T-cell (primary cell): ENCODE measurements at regions of chr1 and their contacts with region 1.

Region 1: GRCh38 chr1:92310185-92310597 is 11.3 kb downstream of the RPAP2 start:
- DNase-seq: peak in 1 of 35 experiments; percentile 65
- ATAC-seq: peak in 3 of 4 experiments; percentile 45 to 63 (median 58)
- H3K4me3 ChIP-seq: no peak overlapping the region
- H3K4me3 Mint-ChIP-seq: no peak overlapping the region
- H3K27ac ChIP-seq: no peak overlapping the region
- H3K27ac Mint-ChIP-seq: peak overlapping the region in 1 of 2 donors; percentile 34
- H3K4me1 ChIP-seq: peaks cover 13 to 19% of the 10 kb centered on the region in 2 experiments
- H3K4me1 Mint-ChIP-seq: peaks cover 36 to 39% (median 38%) of the 10 kb centered on the region in 3 donors
- H3K27me3 ChIP-seq: no peaks in the 10 kb centered on the region
- H3K27me3 Mint-ChIP-seq: no peaks in the 10 kb centered on the region

Region 2: GRCh38 chr1:91997607-91998195 is 312.5 kb before region 1 on chr1:
- CTCF ChIA-PET with region 1: interaction called, 4 to 11 read pairs
- POLR2A ChIA-PET with region 1: no interaction called
- DNase-seq: peak in 30 of 35 experiments; percentile 1 to 80 (median 36)
- ATAC-seq: peak in 1 of 4 experiments; percentile 59
- H3K4me3 ChIP-seq: no peak overlapping the region
- H3K4me3 Mint-ChIP-seq: no peak overlapping the region
- H3K27ac ChIP-seq: no peak overlapping the region
- H3K27ac Mint-ChIP-seq: no peak overlapping the region
- H3K4me1 ChIP-seq: no peaks in the 10 kb centered on the region
- H3K4me1 Mint-ChIP-seq: no peaks in the 10 kb centered on the region
- H3K27me3 ChIP-seq: no peaks in the 10 kb centered on the region
- H3K27me3 Mint-ChIP-seq: peaks cover 0 to 2% of the 10 kb centered on the region in 2 donors

Region 3: GRCh38 chr1:92485381-92486257 is 175.4 kb after region 1 on chr1:
- CTCF ChIA-PET with region 1: interaction called, 7 to 21 read pairs
- POLR2A ChIA-PET with region 1: interaction called in 1 of 2 experiments, 7 read pairs
- DNase-seq: peak; percentile 53 to 86 (median 71)
- ATAC-seq: peak; percentile 66 to 74 (median 68)
- H3K4me3 ChIP-seq: peak overlapping the region; percentile 77 to 95
- H3K4me3 Mint-ChIP-seq: peak overlapping the region; percentile 89 to 98 (median 95)
- H3K27ac ChIP-seq: peak overlapping the region; percentile 73
- H3K27ac Mint-ChIP-seq: peak overlapping the region; percentile 89 to 95
- H3K4me1 ChIP-seq: peaks cover 11 to 45% of the 10 kb centered on the region in 2 experiments
- H3K4me1 Mint-ChIP-seq: peaks cover 37 to 43% (median 42%) of the 10 kb centered on the region in 3 donors
- H3K27me3 ChIP-seq: peaks cover 0 to 5% of the 10 kb centered on the region in 2 experiments
- H3K27me3 Mint-ChIP-seq: peaks cover 0 to 5% of the 10 kb centered on the region in 2 donors

Region 4: GRCh38 chr1:92599184-92599583 is 289.0 kb after region 1 on chr1:
- CTCF ChIA-PET with region 1: interaction called, 7 to 17 read pairs
- POLR2A ChIA-PET with region 1: interaction called in 1 of 2 experiments, 4 read pairs
- DNase-seq: peak in 1 of 35 experiments; percentile 67
- ATAC-seq: peak in 3 of 4 experiments; percentile 50 to 62 (median 55)
- H3K4me3 ChIP-seq: no peak overlapping the region
- H3K4me3 Mint-ChIP-seq: no peak overlapping the region
- H3K27ac ChIP-seq: no peak overlapping the region
- H3K27ac Mint-ChIP-seq: no peak overlapping the region
- H3K4me1 ChIP-seq: no peaks in the 10 kb centered on the region
- H3K4me1 Mint-ChIP-seq: peaks cover 3 to 12% (median 6%) of the 10 kb centered on the region in 3 donors
- H3K27me3 ChIP-seq: no peaks in the 10 kb centered on the region
- H3K27me3 Mint-ChIP-seq: no peaks in the 10 kb centered on the region

Region 5: DNA sequence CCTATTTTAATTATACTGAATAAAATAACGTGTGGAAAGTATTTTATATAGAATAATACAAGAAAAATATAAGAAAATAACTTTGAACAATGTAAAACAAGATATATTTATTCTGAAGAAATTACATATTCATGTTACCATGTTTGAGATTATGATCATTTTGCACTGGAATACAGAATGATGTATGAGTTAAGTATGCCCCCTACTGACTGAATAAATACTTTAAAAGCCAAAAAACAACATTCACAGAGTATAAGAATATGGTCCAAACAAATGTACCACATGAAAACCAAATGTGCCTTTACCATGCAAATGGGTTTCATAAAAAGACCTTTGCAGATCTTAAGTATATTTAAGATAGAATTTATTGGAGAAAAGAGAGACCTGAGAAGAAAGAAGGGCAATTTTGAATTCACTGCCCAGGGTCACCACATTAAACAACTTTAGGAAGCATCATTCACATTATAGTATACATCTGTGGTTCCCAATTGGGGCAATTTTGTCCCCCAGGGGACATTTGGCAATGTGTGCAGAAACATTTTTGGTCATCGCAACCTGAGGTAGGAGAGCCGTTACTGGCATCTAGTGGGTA is 313.1 kb after region 1 on chr1:
- CTCF ChIA-PET with region 1: interaction called, 6 to 26 read pairs
- POLR2A ChIA-PET with region 1: no interaction called
- DNase-seq: peak in 1 of 35 experiments; percentile 55
- ATAC-seq: peak in 2 of 4 experiments; percentile 42 to 69
- H3K4me3 ChIP-seq: no peak overlapping the region
- H3K4me3 Mint-ChIP-seq: no peak overlapping the region
- H3K27ac ChIP-seq: no peak overlapping the region
- H3K27ac Mint-ChIP-seq: no peak overlapping the region
- H3K4me1 ChIP-seq: no peaks in the 10 kb centered on the region
- H3K4me1 Mint-ChIP-seq: no peaks in the 10 kb centered on the region
- H3K27me3 ChIP-seq: no peaks in the 10 kb centered on the region
- H3K27me3 Mint-ChIP-seq: no peaks in the 10 kb centered on the region

Region 6: DNA sequence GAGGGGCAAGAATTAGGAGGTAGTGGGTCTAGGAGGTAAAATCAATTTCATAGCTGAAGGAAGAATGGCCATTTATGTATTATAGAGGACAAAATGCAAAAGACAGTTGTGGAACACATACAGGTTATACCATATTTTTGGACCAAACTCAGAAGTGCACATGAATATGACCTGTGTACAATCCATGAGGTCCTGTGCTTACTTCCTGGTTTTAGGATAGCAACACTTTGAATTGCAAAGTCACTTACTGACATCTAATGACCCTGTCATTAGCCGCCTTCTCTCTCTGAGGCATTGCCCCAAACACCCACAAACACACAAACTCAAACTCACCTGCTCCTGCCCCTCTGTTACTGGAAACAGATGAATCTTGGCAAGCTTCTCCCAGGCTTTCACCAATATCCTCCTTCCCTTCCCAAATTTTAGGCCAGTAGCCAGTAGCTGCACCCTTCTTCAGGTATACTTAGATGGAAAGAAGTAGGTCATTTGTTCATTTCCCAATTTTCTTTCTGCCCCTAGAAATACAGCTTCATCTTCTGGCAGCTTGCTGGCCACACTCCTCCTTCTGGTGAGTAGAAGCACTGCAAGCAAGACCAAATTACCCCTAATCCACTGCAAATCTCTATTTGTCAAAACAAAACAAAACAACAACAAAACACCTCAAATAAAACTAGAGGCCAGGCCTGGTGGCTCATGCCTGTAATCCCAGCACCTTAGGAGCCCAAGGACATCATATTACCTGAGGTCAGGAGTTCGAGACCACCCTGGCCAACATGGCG is 508.0 kb after region 1 on chr1:
- CTCF ChIA-PET with region 1: interaction called in 1 of 2 experiments, 6 read pairs
- POLR2A ChIA-PET with region 1: interaction called in 1 of 2 experiments, 10 read pairs
- DNase-seq: peak in 10 of 35 experiments; percentile 1 to 53 (median 9)
- ATAC-seq: peak in 1 of 4 experiments; percentile 54
- H3K4me3 ChIP-seq: no peak overlapping the region
- H3K4me3 Mint-ChIP-seq: no peak overlapping the region
- H3K27ac ChIP-seq: no peak overlapping the region
- H3K27ac Mint-ChIP-seq: no peak overlapping the region
- H3K4me1 ChIP-seq: no peaks in the 10 kb centered on the region
- H3K4me1 Mint-ChIP-seq: no peaks in the 10 kb centered on the region
- H3K27me3 ChIP-seq: peaks cover 0 to 4% of the 10 kb centered on the region in 2 experiments
- H3K27me3 Mint-ChIP-seq: peaks cover 4 to 9% of the 10 kb centered on the region in 2 donors